CD14-positive monocyte (primary cell): ENCODE measurements at regions of chr1 and their contacts with region 1.

Region 1: DNA sequence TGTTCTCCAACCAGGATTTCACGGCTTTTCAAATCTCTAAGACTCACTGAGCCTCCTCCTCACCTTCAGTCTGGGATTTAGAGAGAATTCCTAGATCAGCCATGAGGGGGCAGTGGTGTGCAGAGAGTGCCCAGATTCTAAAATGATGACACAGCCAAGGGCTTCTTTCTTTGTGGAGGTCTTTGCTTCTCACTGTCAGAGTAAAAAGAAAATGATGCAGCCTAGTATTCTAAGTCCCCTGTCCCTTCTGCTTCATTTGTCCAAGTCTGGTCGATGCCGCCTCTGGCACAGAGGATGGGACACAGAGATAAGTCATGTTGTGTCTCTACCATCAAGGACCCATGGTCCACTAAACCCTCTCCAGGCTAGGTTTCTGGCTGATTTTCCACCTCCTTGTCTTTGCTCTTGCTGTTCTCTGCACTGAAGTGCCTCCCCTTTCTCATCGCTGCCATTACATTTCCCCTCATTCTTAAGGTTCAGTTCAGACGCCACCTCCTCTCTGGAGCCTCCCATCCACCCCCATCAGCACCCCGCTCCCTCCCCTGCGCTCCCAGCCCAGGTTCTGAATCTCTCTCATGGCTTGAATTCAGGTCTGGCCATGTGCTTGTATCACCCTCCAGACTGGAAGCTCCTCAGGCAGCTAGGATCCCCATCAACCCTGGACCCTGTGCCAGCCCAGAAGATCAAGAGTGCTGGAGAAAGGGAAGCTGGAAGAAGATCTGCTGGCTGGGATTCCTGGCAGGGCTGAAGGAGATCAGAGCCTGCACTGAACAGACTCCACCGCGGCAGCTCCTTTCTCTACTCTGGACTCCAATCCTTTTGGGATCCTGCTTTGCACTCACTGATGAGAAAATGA is 12.0 kb upstream of the TINAGL1 start:
- DNase-seq: peak; percentile 22 to 48 (median 44)
- H3K4me3 ChIP-seq: no peak overlapping the region
- H3K4me3 Mint-ChIP-seq: no peak overlapping the region
- H3K27ac ChIP-seq: no peak overlapping the region
- H3K27ac Mint-ChIP-seq: peak overlapping the region in 1 of 7 donors; percentile 49
- H3K4me1 ChIP-seq: no peaks in the 10 kb centered on the region
- H3K4me1 Mint-ChIP-seq: peaks cover 1% of the 10 kb centered on the region
- H3K27me3 ChIP-seq: no peaks in the 10 kb centered on the region
- H3K27me3 Mint-ChIP-seq: peaks cover 0 to 10% (median 4%) of the 10 kb centered on the region in 3 donors
- CTCF ChIP-seq: peak; percentile 87

Region 2: GRCh38 chr1:31617917-31618660 is 53.7 kb after region 1 on chr1:
- intact Hi-C with region 1: loop called (anchors 1 to 5 kb)
- DNase-seq: peak; percentile 25 to 52 (median 43)
- H3K4me3 ChIP-seq: peak overlapping the region in 1 of 3 experiments; percentile 63
- H3K4me3 Mint-ChIP-seq: peak overlapping the region in 1 of 2 donors; percentile 48
- H3K27ac ChIP-seq: no peak overlapping the region
- H3K27ac Mint-ChIP-seq: no peak overlapping the region
- H3K4me1 ChIP-seq: peaks cover 5 to 8% of the 10 kb centered on the region in 2 donors
- H3K4me1 Mint-ChIP-seq: peaks cover 2% of the 10 kb centered on the region
- H3K27me3 ChIP-seq: peaks cover 7 to 32% of the 10 kb centered on the region in 2 donors
- H3K27me3 Mint-ChIP-seq: peaks cover 22 to 37% (median 31%) of the 10 kb centered on the region in 3 donors
- CTCF ChIP-seq: peak; percentile 98

Region 3: GRCh38 chr1:31633053-31633452 is 68.7 kb after region 1 on chr1:
- intact Hi-C with region 1: loop called in 1 of 2 experiments (anchors 5 kb)
- DNase-seq: peak in 2 of 3 donors; percentile 21 to 27
- H3K4me3 ChIP-seq: no peak overlapping the region
- H3K4me3 Mint-ChIP-seq: no peak overlapping the region
- H3K27ac ChIP-seq: no peak overlapping the region
- H3K27ac Mint-ChIP-seq: peak overlapping the region in 1 of 7 donors; percentile 26
- H3K4me1 ChIP-seq: no peaks in the 10 kb centered on the region
- H3K4me1 Mint-ChIP-seq: peaks cover 4% of the 10 kb centered on the region
- H3K27me3 ChIP-seq: no peaks in the 10 kb centered on the region
- H3K27me3 Mint-ChIP-seq: no peaks in the 10 kb centered on the region
- CTCF ChIP-seq: peak; percentile 43

Region 4: DNA sequence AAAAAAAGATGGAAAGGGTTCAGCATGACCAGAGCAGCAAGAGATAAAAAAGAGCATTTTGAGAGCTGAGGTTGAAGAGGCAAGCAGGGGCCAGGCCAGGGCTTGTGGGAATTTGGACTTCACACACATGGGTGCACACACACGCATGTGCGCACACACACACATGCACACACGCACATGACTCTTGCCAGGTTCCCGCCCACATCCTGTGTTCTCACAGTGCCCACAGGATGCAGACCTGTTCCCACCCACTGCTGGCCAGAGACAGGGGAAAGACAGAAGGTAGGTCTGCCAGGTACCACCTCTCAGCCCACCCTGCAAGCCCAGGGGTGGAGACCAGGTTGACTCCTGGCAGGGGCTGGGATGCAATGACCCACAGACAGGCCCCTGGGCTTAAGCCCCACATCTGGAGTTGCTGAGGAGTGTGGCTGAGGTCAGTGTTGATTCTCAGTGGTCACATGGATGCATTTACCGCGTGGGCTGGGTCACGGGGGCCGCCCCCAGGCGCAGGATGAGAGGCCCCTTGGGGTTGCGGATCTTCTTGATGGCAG is 135.1 kb after region 1 on chr1:
- intact Hi-C with region 1: no loop called
- DNase-seq: no peak
- H3K4me3 ChIP-seq: no peak overlapping the region
- H3K4me3 Mint-ChIP-seq: no peak overlapping the region
- H3K27ac ChIP-seq: no peak overlapping the region
- H3K27ac Mint-ChIP-seq: no peak overlapping the region
- H3K4me1 ChIP-seq: no peaks in the 10 kb centered on the region
- H3K4me1 Mint-ChIP-seq: peaks cover 5% of the 10 kb centered on the region
- H3K27me3 ChIP-seq: peaks cover 1 to 19% of the 10 kb centered on the region in 2 donors
- H3K27me3 Mint-ChIP-seq: peaks cover 21 to 24% (median 22%) of the 10 kb centered on the region in 3 donors
- CTCF ChIP-seq: no peak

Region 5: DNA sequence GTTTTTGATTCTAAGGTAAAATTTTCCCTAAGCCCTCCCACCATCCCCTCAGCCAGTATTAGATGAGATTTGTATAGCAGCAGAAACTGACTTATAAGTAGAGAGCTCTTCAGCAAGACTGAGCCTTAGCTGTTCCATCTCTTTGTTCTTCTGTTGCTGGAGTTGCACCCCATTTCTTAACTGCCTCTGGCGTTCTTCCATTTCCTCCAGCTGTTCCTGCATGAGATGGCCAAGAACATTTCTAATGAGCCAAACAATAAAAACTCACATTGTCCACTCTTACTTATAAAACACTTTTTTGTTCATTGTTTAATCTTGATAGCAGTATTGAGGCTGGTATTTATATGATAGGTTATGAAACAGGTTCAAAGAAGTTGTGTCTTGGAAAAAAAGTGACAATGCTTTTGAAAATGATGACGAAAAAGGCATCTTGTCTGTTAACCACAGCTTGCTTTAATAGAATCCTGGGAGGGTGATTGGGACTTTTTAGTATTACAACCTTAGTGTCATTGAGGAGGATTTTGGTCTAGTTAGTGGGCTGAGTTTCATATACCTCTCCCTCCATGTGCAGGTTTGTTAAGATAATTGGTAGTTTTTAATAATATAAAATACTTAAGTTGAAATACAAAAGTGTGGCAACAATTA is 1119.9 kb after region 1 on chr1:
- intact Hi-C with region 1: no loop called
- DNase-seq: no peak
- H3K4me3 ChIP-seq: no peak overlapping the region
- H3K4me3 Mint-ChIP-seq: no peak overlapping the region
- H3K27ac ChIP-seq: no peak overlapping the region
- H3K27ac Mint-ChIP-seq: no peak overlapping the region
- H3K4me1 ChIP-seq: no peaks in the 10 kb centered on the region
- H3K4me1 Mint-ChIP-seq: no peaks in the 10 kb centered on the region
- H3K27me3 ChIP-seq: no peaks in the 10 kb centered on the region
- H3K27me3 Mint-ChIP-seq: no peaks in the 10 kb centered on the region
- CTCF ChIP-seq: no peak